Dorsolateral prefrontal cortex (tissue), 120 donors: ENCODE measurements at regions of chr15 and their contacts with region 1.

Region 1: DNA sequence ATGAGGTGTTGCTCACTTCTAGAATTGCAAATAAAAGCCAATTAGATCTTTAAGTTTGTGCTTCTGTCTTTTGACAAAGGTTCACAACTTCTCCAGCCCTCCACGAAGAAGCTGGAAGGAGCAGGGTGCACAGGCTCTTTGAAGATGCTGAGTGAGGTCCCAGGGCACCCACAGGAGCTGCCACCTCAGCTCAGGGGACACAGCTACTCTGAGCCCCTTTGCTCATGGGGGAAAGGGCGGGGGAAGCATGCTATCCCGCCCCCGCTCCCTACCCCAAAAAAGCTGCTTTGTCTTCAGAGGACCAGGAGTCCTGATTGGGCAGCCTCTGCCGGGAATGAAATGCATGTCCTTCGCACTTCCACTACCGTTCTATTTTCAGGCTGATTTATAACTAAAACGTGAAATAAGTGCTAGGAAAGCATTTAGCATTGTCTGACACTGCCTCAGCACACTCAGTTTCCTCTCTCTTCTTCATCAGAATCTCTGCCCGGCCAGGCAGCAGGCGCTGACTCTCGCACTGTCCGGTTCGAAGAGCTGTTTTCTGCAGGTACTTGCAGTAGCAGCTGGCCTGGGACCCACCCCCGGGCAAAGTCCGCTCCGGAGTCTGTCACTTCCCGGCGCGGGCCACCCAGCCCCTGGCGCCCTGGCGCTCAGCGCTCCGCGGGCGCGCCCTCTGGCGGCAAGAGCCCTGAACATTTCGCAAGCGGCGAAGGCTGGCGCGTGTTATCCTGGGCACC is 45.5 kb upstream of the KLHL25 start:
- DNase-seq: peak; percentile 47 to 87 (median 68)
- H3K4me3 ChIP-seq: peak overlapping the region in 55 of 59 donors; percentile 9 to 65 (median 44)
- H3K27ac ChIP-seq: no peak overlapping the region
- H3K27me3 ChIP-seq: peaks cover 0 to 10% (median 0%) of the 10 kb centered on the region in 45 donors
- CTCF ChIP-seq: peak; percentile 63 to 98 (median 91)

Region 2: GRCh38 chr15:85730001-85730820 is 110.0 kb before region 1 on chr15:
- intact Hi-C with region 1: loop called in 1 of 2 experiments (anchors 2 kb)
- DNase-seq: peak in 2 of 10 donors; percentile 51 to 65
- H3K4me3 ChIP-seq: no peak overlapping the region
- H3K27ac ChIP-seq: peak overlapping the region in 3 of 59 donors; percentile 14 to 31 (median 27)
- H3K27me3 ChIP-seq: no peaks in the 10 kb centered on the region
- CTCF ChIP-seq: peak; percentile 70 to 95 (median 88)

Region 3: DNA sequence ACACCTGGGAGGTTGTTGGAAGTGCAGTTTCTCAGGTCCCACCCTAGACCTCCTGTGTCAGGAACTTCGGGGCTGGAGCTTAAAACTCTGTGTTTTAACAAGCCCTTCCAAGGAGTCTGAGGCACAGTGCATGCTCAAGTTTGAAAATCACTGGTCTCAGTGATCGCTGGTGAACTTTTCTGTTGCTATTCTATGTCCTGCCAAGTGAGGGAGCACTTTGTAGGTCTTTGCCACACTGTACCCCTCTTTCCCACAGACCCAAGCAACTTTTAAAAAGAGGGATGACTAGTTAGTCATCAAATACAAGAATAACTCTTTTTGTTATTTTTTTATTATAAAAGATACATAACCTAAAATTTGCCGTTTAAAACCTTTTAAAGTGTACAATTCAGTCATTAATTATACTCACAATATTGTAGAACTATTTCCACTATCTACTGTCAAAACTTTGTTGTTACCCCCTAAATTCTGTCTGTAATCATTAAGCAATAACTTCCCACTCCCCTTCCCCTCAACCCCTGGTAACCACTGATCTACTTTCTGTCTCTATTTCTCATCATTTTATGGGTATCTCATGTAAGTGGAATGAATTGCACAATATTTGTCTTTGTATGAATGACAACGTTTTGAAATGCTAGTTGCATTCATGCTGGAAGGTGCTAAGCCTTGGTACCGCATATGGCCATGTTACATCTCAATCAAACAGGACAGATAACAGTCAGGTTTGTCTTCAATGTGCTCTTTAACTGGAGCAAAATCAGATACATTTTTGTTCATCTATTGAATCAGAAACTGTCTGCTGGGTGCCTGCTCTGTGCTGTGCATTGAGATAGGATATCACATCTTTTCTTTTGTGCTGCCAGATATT is 373.4 kb after region 1 on chr15:
- intact Hi-C with region 1: no loop called
- DNase-seq: no peak
- H3K4me3 ChIP-seq: no peak overlapping the region
- H3K27ac ChIP-seq: no peak overlapping the region
- H3K27me3 ChIP-seq: peaks cover 0 to 1% (median 0%) of the 10 kb centered on the region in 45 donors
- CTCF ChIP-seq: no peak